ENCODE measurements at regions of chr2 and their contacts with region 1.

Region 1: GRCh38 chr2:203718087-203718486 is 11.6 kb downstream of the CD28 start:
- DNase-seq: peak; percentile 80
- H3K4me3 Mint-ChIP-seq: peak overlapping the region; percentile 44
- H3K27ac Mint-ChIP-seq: peak overlapping the region; percentile 91
- H3K4me1 Mint-ChIP-seq: peaks cover 98% of the 10 kb centered on the region
- H3K27me3 Mint-ChIP-seq: no peaks in the 10 kb centered on the region

Region 2: DNA sequence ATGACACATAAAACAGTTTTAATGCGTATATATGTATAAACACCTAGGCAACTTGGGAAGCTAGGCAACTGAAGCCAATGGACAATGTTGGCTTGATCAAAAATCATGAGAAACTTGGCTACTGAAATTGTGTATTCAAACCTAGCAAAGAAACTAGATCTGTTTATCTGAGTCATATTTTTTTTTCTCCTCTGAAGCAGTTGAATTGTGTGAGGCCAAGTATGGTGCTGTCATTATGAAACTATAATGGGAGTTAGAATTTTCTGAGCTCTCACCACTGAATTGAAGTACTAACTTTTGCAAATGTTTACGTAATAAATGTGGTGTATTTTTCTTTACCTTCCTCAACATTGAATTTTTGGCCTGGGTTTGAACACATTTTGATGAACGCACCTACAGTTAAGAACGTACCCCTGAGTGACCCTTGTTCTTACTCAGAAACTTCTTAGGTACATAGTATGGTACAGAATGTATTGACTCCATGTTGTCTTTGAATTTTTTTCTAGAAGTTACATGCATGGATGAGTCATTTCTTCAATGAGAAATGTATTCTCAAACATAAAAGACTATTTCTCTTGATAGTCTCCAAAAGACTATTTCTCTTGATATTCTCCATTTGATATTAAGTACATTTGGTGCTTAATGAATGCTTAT is 12.1 kb after region 1 on chr2:
- CTCF ChIA-PET with region 1: interaction called, 56 read pairs
- DNase-seq: no peak
- H3K4me3 Mint-ChIP-seq: peak overlapping the region; percentile 22
- H3K27ac Mint-ChIP-seq: peak overlapping the region; percentile 93
- H3K4me1 Mint-ChIP-seq: peaks cover 92% of the 10 kb centered on the region
- H3K27me3 Mint-ChIP-seq: no peaks in the 10 kb centered on the region

Region 3: GRCh38 chr2:203740780-203741281 is 22.7 kb after region 1 on chr2:
- CTCF ChIA-PET with region 1: interaction called, 22 read pairs
- DNase-seq: peak; percentile 58
- H3K4me3 Mint-ChIP-seq: peak overlapping the region; percentile 51
- H3K27ac Mint-ChIP-seq: peak overlapping the region; percentile 97
- H3K4me1 Mint-ChIP-seq: peaks cover 83% of the 10 kb centered on the region
- H3K27me3 Mint-ChIP-seq: no peaks in the 10 kb centered on the region